Endothelial cell of umbilical vein (primary cell): ENCODE measurements at regions of chr6 and their contacts with region 1.

Region 1: GRCh38 chr6:38570750-38571149 is 69.0 kb downstream of the BTBD9 start:
- DNase-seq: peak; percentile 58
- H3K4me3 ChIP-seq: no peak overlapping the region
- H3K27ac ChIP-seq: no peak overlapping the region
- H3K4me1 ChIP-seq: peaks cover 36% of the 10 kb centered on the region
- H3K27me3 ChIP-seq: no peaks in the 10 kb centered on the region
- CTCF ChIP-seq: peak; percentile 10 to 14
- POLR2A ChIP-seq: no peak

Region 2: DNA sequence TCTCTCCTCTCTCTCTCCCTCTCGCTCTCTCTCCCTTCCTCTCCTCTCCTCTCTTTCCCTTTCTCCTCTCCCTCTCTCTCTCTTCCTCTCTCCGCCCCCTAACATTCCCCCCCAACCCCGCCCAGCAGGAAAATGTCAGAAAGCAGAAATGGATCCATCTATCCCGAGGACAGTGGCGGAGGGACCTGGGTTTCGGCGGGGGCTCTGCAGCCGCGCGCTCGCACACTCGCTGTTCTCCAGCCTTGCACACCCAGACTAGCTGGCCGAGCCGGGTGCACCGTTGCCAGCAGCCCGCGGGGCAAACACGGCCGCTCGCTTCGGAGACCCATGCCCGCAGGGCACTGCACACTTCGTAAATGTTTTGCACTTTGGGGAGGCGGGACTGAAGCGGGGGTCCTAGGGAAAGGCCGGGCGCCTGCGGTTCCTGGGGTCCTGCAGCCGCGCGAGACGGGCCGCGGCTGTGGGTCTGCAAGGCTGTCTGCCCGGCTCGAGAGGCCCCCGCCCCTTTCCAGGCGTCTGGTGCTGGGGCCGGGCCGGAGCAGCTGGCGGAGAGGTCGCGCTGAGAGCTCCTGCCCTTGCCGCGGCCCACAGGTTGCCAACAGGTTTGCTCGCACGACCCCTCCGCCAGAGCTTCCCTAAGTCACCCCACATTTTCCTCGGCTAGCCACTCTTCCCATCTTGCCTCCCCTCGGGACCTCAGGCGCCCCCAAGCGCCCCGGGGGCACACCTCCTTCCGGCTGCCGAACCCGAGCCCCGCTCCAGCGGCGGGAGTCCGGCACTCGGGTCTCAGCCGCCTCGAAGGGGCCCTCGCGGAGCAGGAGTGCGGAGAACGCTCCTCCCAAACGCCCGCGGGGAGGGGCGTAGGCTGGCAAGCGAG is 872.3 kb before region 1 on chr6:
- CTCF ChIA-PET with region 1: interaction called, 13 read pairs
- POLR2A ChIA-PET with region 1: no interaction called
- dilution Hi-C with region 1: no loop called
- intact Hi-C with region 1: loop called (anchors 5 kb)
- DNase-seq: peak; percentile 53
- H3K4me3 ChIP-seq: peak overlapping the region; percentile 55 to 85 (median 77)
- H3K27ac ChIP-seq: no peak overlapping the region
- H3K4me1 ChIP-seq: peaks cover 16% of the 10 kb centered on the region
- H3K27me3 ChIP-seq: peaks cover 33 to 50% of the 10 kb centered on the region in 2 experiments
- CTCF ChIP-seq: no peak
- POLR2A ChIP-seq: no peak

Region 3: GRCh38 chr6:37791156-37791919 is 779.4 kb before region 1 on chr6:
- CTCF ChIA-PET with region 1: interaction called, 6 read pairs
- POLR2A ChIA-PET with region 1: no interaction called
- dilution Hi-C with region 1: no loop called
- intact Hi-C with region 1: loop called (anchors 5 kb)
- DNase-seq: peak; percentile 94
- H3K4me3 ChIP-seq: no peak overlapping the region
- H3K27ac ChIP-seq: no peak overlapping the region
- H3K4me1 ChIP-seq: peaks cover 5% of the 10 kb centered on the region
- H3K27me3 ChIP-seq: peaks cover 2% of the 10 kb centered on the region in 2 experiments
- CTCF ChIP-seq: peak; percentile 97 to 98
- POLR2A ChIP-seq: no peak

Region 4: GRCh38 chr6:38443352-38444146 is 127.2 kb before region 1 on chr6:
- CTCF ChIA-PET with region 1: no interaction called
- POLR2A ChIA-PET with region 1: no interaction called
- dilution Hi-C with region 1: no loop called
- intact Hi-C with region 1: no loop called
- DNase-seq: no peak
- H3K4me3 ChIP-seq: no peak overlapping the region
- H3K27ac ChIP-seq: no peak overlapping the region
- H3K4me1 ChIP-seq: no peaks in the 10 kb centered on the region
- H3K27me3 ChIP-seq: no peaks in the 10 kb centered on the region
- CTCF ChIP-seq: no peak
- POLR2A ChIP-seq: no peak

Region 5: DNA sequence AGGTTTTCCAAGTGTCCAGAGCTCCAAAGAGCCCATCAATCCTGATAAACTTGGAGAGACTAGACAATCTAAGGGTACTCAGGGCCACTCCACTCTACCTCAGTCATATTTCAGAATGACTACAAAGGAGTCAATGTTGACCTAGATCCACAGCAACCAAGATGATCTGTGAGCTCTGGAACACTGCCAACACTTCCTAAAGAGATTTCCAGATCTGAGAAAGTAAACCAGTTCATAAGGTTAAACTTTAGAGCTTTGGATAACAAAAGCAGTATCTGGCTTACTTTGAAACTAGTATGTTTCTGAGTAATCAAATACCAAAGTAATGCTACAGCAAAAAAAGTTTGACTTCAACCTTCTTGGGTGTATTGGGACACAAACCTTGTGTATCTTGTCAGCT is 53.7 kb before region 1 on chr6:
- CTCF ChIA-PET with region 1: interaction called, 13 read pairs
- POLR2A ChIA-PET with region 1: no interaction called
- dilution Hi-C with region 1: no loop called
- intact Hi-C with region 1: no loop called
- DNase-seq: no peak
- H3K4me3 ChIP-seq: no peak overlapping the region
- H3K27ac ChIP-seq: no peak overlapping the region
- H3K4me1 ChIP-seq: peaks cover 4% of the 10 kb centered on the region
- H3K27me3 ChIP-seq: no peaks in the 10 kb centered on the region
- CTCF ChIP-seq: no peak
- POLR2A ChIP-seq: no peak

Region 6: GRCh38 chr6:38639498-38640215 is 68.9 kb after region 1 on chr6 and contains the start of gene BTBD9:
- CTCF ChIA-PET with region 1: no interaction called
- POLR2A ChIA-PET with region 1: no interaction called
- dilution Hi-C with region 1: no loop called
- intact Hi-C with region 1: loop called (anchors 2 kb)
- DNase-seq: peak; percentile 88
- H3K4me3 ChIP-seq: peak within 1 kb of the TSS; percentile 34 to 69 (median 66)
- H3K27ac ChIP-seq: peak within 1 kb of the TSS; percentile 91
- H3K4me1 ChIP-seq: peaks cover 16% of the 10 kb centered on the region
- H3K27me3 ChIP-seq: no peaks in the 10 kb centered on the region
- CTCF ChIP-seq: no peak
- POLR2A ChIP-seq: peak; percentile 53
- total RNA-seq, gene BTBD9: 15.0 and 16.0 TPM in 2 replicates